Cardiac septum (tissue), 1 donor: ENCODE measurements at regions of chr2 and their contacts with region 1.

Region 1: GRCh38 chr2:164841719-164842623 is at the start of gene COBLL1:
- DNase-seq: peak; percentile 89
- total RNA-seq, gene COBLL1: 15.0 TPM

Region 2: GRCh38 chr2:164675027-164675426 is 166.9 kb before region 1 on chr2:
- intact Hi-C with region 1: no loop called
- DNase-seq: no peak

Region 3: GRCh38 chr2:164785457-164785856 is 56.5 kb before region 1 on chr2:
- intact Hi-C with region 1: loop called (anchors 2 kb)
- DNase-seq: no peak

Region 4: GRCh38 chr2:164917296-164917903 is 75.4 kb after region 1 on chr2:
- intact Hi-C with region 1: loop called (anchors 2 kb)
- DNase-seq: no peak